GM23248 (cell line): ENCODE measurements at regions of chr15 and their contacts with region 1.

Region 1: GRCh38 chr15:24823473-24823872 is 131.3 kb upstream of the SNRPN start:
- DNase-seq: no peak
- H3K4me3 ChIP-seq: no peak overlapping the region
- H3K27ac ChIP-seq: no peak overlapping the region
- H3K4me1 ChIP-seq: no peaks in the 10 kb centered on the region
- H3K27me3 ChIP-seq: no peaks in the 10 kb centered on the region

Region 2: GRCh38 chr15:24696842-24697241 is 126.6 kb before region 1 on chr15:
- in situ Hi-C with region 1: no loop called
- DNase-seq: no peak
- H3K4me3 ChIP-seq: no peak overlapping the region
- H3K27ac ChIP-seq: no peak overlapping the region
- H3K4me1 ChIP-seq: no peaks in the 10 kb centered on the region
- H3K27me3 ChIP-seq: no peaks in the 10 kb centered on the region

Region 3: GRCh38 chr15:24916305-24917009 is 93.0 kb after region 1 on chr15:
- in situ Hi-C with region 1: loop called (anchors 25 kb)
- DNase-seq: no peak
- H3K4me3 ChIP-seq: no peak overlapping the region
- H3K27ac ChIP-seq: no peak overlapping the region
- H3K4me1 ChIP-seq: no peaks in the 10 kb centered on the region
- H3K27me3 ChIP-seq: no peaks in the 10 kb centered on the region